HAP-1 (cell line): ENCODE measurements at regions of chr6 and their contacts with region 1.

Region 1: GRCh38 chr6:125986300-125987025 is at the start of gene TRMT11:
- DNase-seq: peak; percentile 89 to 95
- H3K4me3 ChIP-seq: peak within 1 kb of the TSS; percentile 82
- H3K4me1 ChIP-seq: peaks cover 18% of the 10 kb centered on the region
- H3K27me3 ChIP-seq: no peaks in the 10 kb centered on the region

Region 2: DNA sequence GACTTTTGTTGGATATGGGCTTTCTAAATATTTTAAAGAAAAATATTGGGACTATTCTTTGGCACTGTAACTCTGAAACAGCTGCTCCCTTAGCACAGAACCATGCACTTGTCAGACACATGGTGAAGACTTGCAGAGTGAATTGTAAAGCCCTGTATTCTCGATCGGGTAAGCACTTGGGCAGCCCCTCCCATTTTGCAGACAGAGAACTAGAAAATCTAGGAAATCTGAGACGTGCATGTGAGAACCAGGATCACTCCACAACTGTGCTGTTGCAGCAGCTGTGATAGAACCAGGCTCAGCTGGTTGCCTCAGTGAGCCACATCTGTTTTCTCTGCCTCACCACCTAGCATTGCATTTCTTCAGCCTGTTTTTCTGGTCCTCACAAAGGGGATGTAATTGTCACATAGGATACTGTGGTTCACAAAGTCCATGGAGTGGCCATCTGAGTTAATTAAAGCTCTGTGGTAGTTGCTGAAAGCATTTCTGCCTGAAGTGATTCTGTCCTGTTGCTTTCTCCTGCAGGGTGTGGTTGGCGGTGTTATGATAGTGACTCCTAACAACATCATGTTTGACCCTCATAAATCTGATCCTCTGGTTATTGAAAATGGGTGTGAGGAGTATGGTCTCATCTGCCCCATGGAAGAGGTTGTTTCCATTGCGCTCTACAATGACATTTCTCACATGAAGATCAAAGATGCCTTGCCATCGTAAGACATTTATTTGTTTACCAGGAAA is 101.7 kb before region 1 on chr6:
- in situ Hi-C with region 1: no loop called
- DNase-seq: no peak
- H3K4me3 ChIP-seq: no peak overlapping the region
- H3K4me1 ChIP-seq: no peaks in the 10 kb centered on the region
- H3K27me3 ChIP-seq: no peaks in the 10 kb centered on the region

Region 3: GRCh38 chr6:126339796-126340609 is 353.5 kb after region 1 on chr6 and contains the start of gene CENPW:
- in situ Hi-C with region 1: loop called (anchors 25 kb)
- DNase-seq: peak; percentile 70 to 97
- H3K4me3 ChIP-seq: peak within 1 kb of the TSS; percentile 74
- H3K4me1 ChIP-seq: peaks cover 42% of the 10 kb centered on the region
- H3K27me3 ChIP-seq: peaks cover 4% of the 10 kb centered on the region; the same call in 1 of the 2 replicates